Gastrocnemius medialis (tissue), 4 donors: ENCODE measurements at regions of chr1 and their contacts with region 1.

Region 1: GRCh38 chr1:107870696-107871095 is 94.3 kb downstream of the VAV3 start:
- DNase-seq: no peak
- ATAC-seq: no peak
- H3K4me3 ChIP-seq: no peak overlapping the region
- H3K27ac ChIP-seq: no peak overlapping the region
- H3K4me1 ChIP-seq: no peaks in the 10 kb centered on the region
- H3K27me3 ChIP-seq: no peaks in the 10 kb centered on the region
- CTCF ChIP-seq: no peak
- POLR2A ChIP-seq: no peak

Region 2: GRCh38 chr1:107926436-107927080 is 55.9 kb after region 1 on chr1:
- in situ Hi-C with region 1: no loop called
- intact Hi-C with region 1: no loop called
- DNase-seq: no peak
- ATAC-seq: no peak
- H3K4me3 ChIP-seq: no peak overlapping the region
- H3K27ac ChIP-seq: no peak overlapping the region
- H3K4me1 ChIP-seq: no peaks in the 10 kb centered on the region
- H3K27me3 ChIP-seq: no peaks in the 10 kb centered on the region
- CTCF ChIP-seq: no peak
- POLR2A ChIP-seq: no peak

Region 3: DNA sequence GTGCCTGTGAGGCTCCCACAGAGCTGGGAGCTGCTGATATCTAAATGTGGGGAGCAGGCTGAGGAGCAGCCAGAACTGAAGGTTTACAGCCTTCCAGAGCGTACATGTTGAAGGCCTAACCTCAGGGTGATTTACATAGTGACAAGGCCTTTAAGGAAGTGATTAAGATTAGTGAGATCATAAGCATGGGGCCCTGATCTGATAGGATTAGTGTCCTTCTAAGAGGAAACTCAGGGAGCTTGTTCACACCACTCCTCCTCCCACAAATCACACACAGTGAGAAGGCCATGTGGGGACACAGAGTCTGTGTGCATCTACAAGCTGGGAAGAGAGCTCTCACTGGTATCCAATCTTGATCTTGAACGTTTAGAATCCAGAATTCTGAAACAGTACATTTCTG is 487.1 kb after region 1 on chr1:
- in situ Hi-C with region 1: loop called in 1 of 4 experiments (anchors 25 kb)
- intact Hi-C with region 1: no loop called
- DNase-seq: no peak
- ATAC-seq: no peak
- H3K4me3 ChIP-seq: no peak overlapping the region
- H3K27ac ChIP-seq: no peak overlapping the region
- H3K4me1 ChIP-seq: no peaks in the 10 kb centered on the region
- H3K27me3 ChIP-seq: no peaks in the 10 kb centered on the region
- CTCF ChIP-seq: no peak
- POLR2A ChIP-seq: no peak